Transverse colon (tissue), 4 donors: ENCODE measurements at regions of chr4 and their contacts with region 1.

Region 1: GRCh38 chr4:87309625-87310024 is 13.1 kb downstream of the HSD17B13 start:
- DNase-seq: no peak
- H3K4me3 ChIP-seq: no peak overlapping the region
- H3K27ac ChIP-seq: no peak overlapping the region
- H3K4me1 ChIP-seq: peaks cover 0 to 14% (median 0%) of the 10 kb centered on the region in 4 donors
- H3K27me3 ChIP-seq: no peaks in the 10 kb centered on the region
- CTCF ChIP-seq: no peak
- EP300 ChIP-seq: no peak
- POLR2A ChIP-seq: no peak

Region 2: DNA sequence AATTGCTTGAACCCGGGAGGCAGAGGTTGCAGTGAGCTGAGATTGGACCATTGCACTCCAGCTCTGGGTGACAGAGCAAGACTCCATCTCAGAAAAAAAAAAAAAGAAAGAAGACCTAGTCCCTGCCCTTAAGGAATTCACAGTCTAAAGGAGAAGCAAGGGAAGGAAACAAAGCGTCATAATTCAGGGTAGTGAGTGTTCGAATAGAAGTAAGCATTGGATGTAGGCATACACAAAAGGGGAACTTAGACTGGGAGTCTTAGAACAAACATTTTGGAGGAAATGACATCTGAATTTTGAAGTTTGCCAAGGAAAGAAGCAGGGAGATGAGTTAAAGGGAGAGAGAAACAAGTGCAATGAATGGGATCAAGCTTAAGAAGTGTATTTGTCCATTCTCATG is 942.3 kb after region 1 on chr4:
- in situ Hi-C with region 1: no loop called
- intact Hi-C with region 1: loop called (anchors 5 kb)
- DNase-seq: no peak
- H3K4me3 ChIP-seq: no peak overlapping the region
- H3K27ac ChIP-seq: no peak overlapping the region
- H3K4me1 ChIP-seq: no peaks in the 10 kb centered on the region
- H3K27me3 ChIP-seq: no peaks in the 10 kb centered on the region
- CTCF ChIP-seq: no peak
- EP300 ChIP-seq: no peak
- POLR2A ChIP-seq: no peak